Endothelial cell of umbilical vein (primary cell): ENCODE measurements at regions of chr5 and their contacts with region 1.

Region 1: DNA sequence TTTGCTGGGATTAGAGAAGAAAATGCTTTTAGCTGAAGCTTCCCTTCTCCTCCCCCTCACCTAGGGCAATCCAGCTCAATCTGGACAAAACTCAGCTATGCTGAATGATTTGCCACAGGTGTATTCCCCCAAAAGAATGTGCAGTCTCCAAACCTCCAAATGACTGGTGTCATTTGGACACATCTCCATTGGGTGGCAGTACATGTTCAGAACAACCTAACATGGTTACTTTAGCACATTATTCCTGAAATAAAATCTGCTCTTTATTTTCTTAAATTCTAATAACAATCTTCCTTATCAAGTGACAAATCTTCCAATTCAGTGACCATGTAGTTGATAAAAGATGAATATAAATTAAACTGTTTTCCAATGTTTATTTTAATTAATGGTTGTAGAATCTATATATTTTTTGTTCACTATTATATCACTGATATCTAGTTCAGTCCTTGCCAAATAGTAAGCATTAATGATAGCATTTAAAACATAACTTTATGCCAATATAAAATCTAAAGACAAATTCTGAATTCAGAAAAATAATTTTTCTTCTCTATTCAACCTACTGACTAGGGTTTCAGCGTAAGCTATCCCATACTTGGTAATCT is 61.3 kb upstream of the MOCS2 start:
- DNase-seq: peak; percentile 43
- H3K4me3 ChIP-seq: no peak overlapping the region
- H3K27ac ChIP-seq: no peak overlapping the region
- H3K4me1 ChIP-seq: no peaks in the 10 kb centered on the region
- H3K27me3 ChIP-seq: peaks cover 2 to 12% of the 10 kb centered on the region in 2 experiments
- CTCF ChIP-seq: peak; percentile 41 to 42
- POLR2A ChIP-seq: no peak

Region 2: DNA sequence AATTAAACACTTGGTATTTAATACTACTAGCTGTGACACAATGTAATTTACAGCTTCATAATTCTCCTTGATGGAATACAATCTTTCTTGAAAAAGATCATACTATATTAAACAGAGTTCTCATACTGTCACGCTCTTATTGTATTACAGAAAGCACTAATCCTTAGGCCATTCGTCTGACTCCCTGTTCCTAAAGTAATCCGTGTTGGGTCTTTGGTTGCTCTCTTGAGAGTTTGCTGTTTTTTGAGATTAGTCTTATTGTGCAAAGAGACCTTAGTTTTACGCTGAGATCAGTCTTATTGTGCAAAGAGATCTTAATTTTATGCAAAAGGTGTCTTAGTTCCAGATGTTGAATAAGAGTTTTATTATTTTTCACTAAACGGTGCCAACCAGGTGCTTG is 1597.0 kb before region 1 on chr5:
- CTCF ChIA-PET with region 1: no interaction called
- POLR2A ChIA-PET with region 1: no interaction called
- dilution Hi-C with region 1: no loop called
- intact Hi-C with region 1: no loop called
- DNase-seq: no peak
- H3K4me3 ChIP-seq: no peak overlapping the region
- H3K27ac ChIP-seq: no peak overlapping the region
- H3K4me1 ChIP-seq: no peaks in the 10 kb centered on the region
- H3K27me3 ChIP-seq: no peaks in the 10 kb centered on the region
- CTCF ChIP-seq: no peak
- POLR2A ChIP-seq: no peak

Region 3: GRCh38 chr5:53425598-53426511 is 255.0 kb after region 1 on chr5:
- CTCF ChIA-PET with region 1: interaction called, 26 read pairs
- POLR2A ChIA-PET with region 1: no interaction called
- dilution Hi-C with region 1: no loop called
- intact Hi-C with region 1: loop called (anchors 1 kb)
- DNase-seq: no peak
- H3K4me3 ChIP-seq: no peak overlapping the region
- H3K27ac ChIP-seq: no peak overlapping the region
- H3K4me1 ChIP-seq: no peaks in the 10 kb centered on the region
- H3K27me3 ChIP-seq: no peaks in the 10 kb centered on the region
- CTCF ChIP-seq: peak in 1 of 2 donors; percentile 20
- POLR2A ChIP-seq: no peak

Region 4: GRCh38 chr5:54229041-54229780 is 1058.4 kb after region 1 on chr5:
- CTCF ChIA-PET with region 1: interaction called, 30 read pairs
- POLR2A ChIA-PET with region 1: no interaction called
- dilution Hi-C with region 1: no loop called
- intact Hi-C with region 1: loop called (anchors 2 kb)
- DNase-seq: peak; percentile 62
- H3K4me3 ChIP-seq: no peak overlapping the region
- H3K27ac ChIP-seq: no peak overlapping the region
- H3K4me1 ChIP-seq: no peaks in the 10 kb centered on the region
- H3K27me3 ChIP-seq: peaks cover 0 to 3% of the 10 kb centered on the region in 2 experiments
- CTCF ChIP-seq: peak; percentile 78 to 88
- POLR2A ChIP-seq: no peak

Region 5: DNA sequence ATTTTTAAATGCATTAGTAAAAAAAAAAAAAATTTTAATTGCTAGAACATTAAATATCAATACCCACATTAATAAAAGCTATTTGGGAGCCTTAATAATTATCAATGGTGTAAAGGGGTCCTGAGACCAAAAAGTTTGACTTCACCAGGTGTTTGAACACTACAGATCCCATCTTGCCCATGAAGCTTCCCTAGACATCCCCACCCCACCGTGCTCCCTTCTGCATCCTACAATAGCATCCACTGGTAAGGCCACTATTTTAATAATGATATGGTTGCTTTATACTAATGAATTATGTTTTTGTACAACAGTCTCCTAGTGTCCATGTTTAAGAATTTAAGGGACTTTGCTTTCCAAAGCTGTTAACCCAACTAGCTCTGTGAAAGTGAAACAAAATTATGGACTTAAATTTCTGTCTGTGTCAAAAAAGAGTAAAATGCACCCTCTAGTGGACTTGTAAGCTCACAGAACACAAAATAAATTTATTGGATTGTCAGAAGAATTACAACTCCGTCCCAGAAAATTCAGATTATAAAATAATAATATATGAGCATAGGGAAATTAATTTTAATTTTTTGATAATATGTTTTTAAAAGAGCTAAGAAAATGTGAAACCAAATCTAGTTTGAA is 1063.6 kb after region 1 on chr5:
- CTCF ChIA-PET with region 1: interaction called, 30 read pairs
- POLR2A ChIA-PET with region 1: no interaction called
- dilution Hi-C with region 1: no loop called
- intact Hi-C with region 1: loop called (anchors 2 kb)
- DNase-seq: peak; percentile 38
- H3K4me3 ChIP-seq: no peak overlapping the region
- H3K27ac ChIP-seq: no peak overlapping the region
- H3K4me1 ChIP-seq: no peaks in the 10 kb centered on the region
- H3K27me3 ChIP-seq: peaks cover 0 to 5% of the 10 kb centered on the region in 2 experiments
- CTCF ChIP-seq: peak; percentile 21 to 36
- POLR2A ChIP-seq: no peak